MCF 10A (cell line): ENCODE measurements at regions of chr1 and their contacts with region 1.

Region 1: GRCh38 chr1:19240673-19241538 is 10.4 kb downstream of the EMC1 start:
- DNase-seq: peak; percentile 78
- H3K4me3 Mint-ChIP-seq: no peak overlapping the region
- H3K27ac Mint-ChIP-seq: peak overlapping the region; percentile 78
- H3K4me1 Mint-ChIP-seq: no peaks in the 10 kb centered on the region
- H3K27me3 Mint-ChIP-seq: no peaks in the 10 kb centered on the region
- CTCF ChIP-seq: peak; percentile 90

Region 2: DNA sequence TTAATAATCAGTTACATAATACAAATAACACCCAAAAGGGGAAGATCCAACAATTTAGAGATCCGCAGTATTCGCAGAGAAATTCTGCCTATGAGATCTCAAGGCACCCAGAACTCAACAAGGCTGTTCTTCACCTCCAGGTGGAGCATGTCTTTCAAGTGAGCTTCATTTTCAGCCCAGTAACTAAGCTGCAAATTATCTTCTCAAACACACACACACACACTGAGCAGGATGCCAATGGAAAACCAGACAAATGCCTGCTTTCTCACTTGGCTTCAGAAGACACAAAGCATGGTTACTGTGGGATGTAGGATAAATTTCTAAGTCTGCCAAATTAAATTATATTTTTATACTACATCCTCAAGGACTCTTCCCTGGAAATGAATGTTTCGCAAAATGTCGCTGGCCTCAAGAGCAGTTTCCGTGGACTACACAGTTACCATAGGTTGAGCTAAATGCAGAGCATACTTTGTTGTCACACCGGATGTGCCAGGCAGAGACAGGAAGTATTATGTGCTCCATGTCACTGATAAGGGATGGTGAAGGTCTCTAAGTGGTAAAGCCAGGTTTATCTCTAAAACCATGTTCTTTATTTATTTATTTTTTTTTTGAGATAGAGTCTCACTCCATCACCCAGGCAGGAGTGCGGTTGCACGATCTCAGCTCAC is 61.2 kb before region 1 on chr1:
- CTCF ChIA-PET with region 1: interaction called, 5 read pairs
- POLR2A ChIA-PET with region 1: no interaction called
- intact Hi-C with region 1: loop called (anchors 1 kb)
- DNase-seq: peak; percentile 20
- H3K4me3 Mint-ChIP-seq: no peak overlapping the region
- H3K27ac Mint-ChIP-seq: peak overlapping the region; percentile 5
- H3K4me1 Mint-ChIP-seq: no peaks in the 10 kb centered on the region
- H3K27me3 Mint-ChIP-seq: no peaks in the 10 kb centered on the region
- CTCF ChIP-seq: peak; percentile 10

Region 3: GRCh38 chr1:19209990-19210771 is 30.7 kb before region 1 on chr1 and contains the start of gene UBR4:
- CTCF ChIA-PET with region 1: interaction called, 4 read pairs
- POLR2A ChIA-PET with region 1: interaction called, 18 read pairs
- intact Hi-C with region 1: no loop called
- DNase-seq: peak; percentile 95
- H3K4me3 Mint-ChIP-seq: peak within 1 kb of the TSS; percentile 79
- H3K27ac Mint-ChIP-seq: peak within 1 kb of the TSS; percentile 94
- H3K4me1 Mint-ChIP-seq: peaks cover 24% of the 10 kb centered on the region
- H3K27me3 Mint-ChIP-seq: no peaks in the 10 kb centered on the region
- CTCF ChIP-seq: no peak
- total RNA-seq, gene UBR4: 154 and 181 TPM in 2 replicates

Region 4: GRCh38 chr1:19325958-19326748 is 85.2 kb after region 1 on chr1:
- CTCF ChIA-PET with region 1: no interaction called
- POLR2A ChIA-PET with region 1: no interaction called
- intact Hi-C with region 1: no loop called
- DNase-seq: no peak
- H3K4me3 Mint-ChIP-seq: no peak overlapping the region
- H3K27ac Mint-ChIP-seq: no peak overlapping the region
- H3K4me1 Mint-ChIP-seq: no peaks in the 10 kb centered on the region
- H3K27me3 Mint-ChIP-seq: no peaks in the 10 kb centered on the region
- CTCF ChIP-seq: no peak

Region 5: GRCh38 chr1:19390901-19391595 is 150.1 kb after region 1 on chr1:
- CTCF ChIA-PET with region 1: no interaction called
- POLR2A ChIA-PET with region 1: no interaction called
- intact Hi-C with region 1: no loop called
- DNase-seq: peak; percentile 43
- H3K4me3 Mint-ChIP-seq: no peak overlapping the region
- H3K27ac Mint-ChIP-seq: no peak overlapping the region
- H3K4me1 Mint-ChIP-seq: peaks cover 26% of the 10 kb centered on the region
- H3K27me3 Mint-ChIP-seq: no peaks in the 10 kb centered on the region
- CTCF ChIP-seq: peak; percentile 75